ENCODE measurements at regions of chr1 and their contacts with region 1.

Region 1: DNA sequence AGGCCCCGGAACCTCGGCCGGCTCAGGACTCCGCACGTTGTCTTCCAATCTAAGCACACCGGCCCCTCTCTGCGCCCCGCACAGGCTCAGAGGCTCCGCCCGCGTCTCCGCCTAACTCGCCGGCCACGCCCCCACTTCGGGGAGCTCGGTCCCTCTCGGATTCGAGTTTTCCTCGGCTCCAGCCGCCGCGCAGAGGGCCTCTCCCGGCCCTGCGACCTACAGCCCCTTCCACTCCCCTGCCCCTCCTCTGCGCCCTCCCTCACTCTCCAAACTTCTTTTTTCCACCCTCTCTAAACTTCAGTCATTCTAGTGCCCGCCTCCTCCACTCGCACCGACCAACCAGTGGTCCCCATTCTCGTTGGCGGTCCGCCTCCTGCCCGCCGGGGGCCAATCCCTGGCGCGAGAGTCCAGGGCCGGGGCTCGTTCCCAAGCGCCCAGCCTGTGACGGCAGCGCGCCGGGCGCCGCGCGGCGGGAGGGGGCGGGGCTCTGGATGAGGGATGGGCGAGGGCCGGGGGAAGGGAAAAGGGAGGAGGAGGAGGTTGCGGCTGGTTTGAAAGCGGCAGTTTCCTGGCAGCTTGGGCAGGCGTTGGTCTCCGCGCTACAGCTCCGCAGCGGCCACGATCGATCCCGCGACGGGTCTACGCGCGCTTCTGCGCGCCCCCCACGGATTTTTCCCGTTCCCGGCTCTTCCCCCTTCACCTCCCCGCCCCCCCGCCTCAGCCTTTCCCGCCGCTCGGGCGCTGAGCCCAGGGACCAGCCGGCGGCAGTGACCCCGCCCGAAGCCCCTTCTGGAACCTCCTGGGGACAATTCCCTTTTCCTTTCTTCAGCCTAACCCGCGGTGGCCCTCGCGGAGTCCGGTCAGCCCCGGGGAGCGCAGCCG is at the start of gene MAGI3:
- DNase-seq: peak; percentile 92 to 94 (median 93)
- H3K4me3 ChIP-seq: peak within 1 kb of the TSS; percentile 44 to 89
- H3K4me3 Mint-ChIP-seq: peak within 1 kb of the TSS; percentile 88 to 98 (median 92)
- H3K27ac ChIP-seq: peak within 1 kb of the TSS; percentile 60
- H3K27ac Mint-ChIP-seq: peak within 1 kb of the TSS; percentile 80 to 95 (median 91)
- H3K4me1 ChIP-seq: peaks cover 30% of the 10 kb centered on the region
- H3K4me1 Mint-ChIP-seq: peaks cover 20 to 36% (median 23%) of the 10 kb centered on the region in 4 donors
- H3K27me3 ChIP-seq: no peaks in the 10 kb centered on the region
- H3K27me3 Mint-ChIP-seq: no peaks in the 10 kb centered on the region
- total RNA-seq, gene MAGI3: 6.5 to 6.7 TPM

Region 2: DNA sequence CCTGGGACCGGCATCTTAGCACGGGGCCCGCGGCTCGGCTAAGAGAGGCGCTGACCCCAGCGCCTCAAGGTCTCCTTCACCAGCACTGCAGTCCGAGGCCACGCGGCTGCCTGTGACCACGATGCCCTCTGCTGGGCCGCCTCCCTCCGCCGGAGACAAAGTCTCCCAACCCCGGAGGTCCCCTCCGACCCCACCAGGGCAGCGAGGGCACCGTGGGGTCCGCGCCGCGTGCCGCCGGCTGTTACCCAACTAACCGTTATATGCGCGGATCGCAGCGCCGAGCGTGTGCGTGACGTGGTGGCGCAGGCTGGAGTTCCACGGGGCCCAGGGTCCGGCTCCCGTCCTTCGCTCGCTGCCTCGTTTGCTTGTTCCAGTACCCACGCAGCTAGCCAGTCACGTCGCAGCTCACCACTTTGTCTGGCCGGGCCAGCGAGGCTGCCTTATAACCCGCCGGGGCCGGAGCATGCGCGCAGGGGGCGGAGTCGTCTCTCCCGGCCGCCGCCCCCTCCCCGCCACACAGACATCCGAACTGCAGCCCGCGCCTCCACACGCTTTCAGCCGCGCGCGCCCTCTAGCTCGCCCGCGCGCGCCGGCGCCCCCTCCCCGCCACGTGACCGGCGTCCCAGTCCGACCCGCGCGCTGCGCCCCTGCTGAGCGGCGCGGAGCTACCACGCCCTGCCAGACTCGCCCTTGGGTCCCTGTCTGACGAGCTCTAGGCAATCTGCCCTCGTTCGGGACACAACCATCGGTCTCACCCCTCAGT is 434.2 kb before region 1 on chr1 and contains the start of gene SLC16A1:
- CTCF ChIA-PET with region 1: no interaction called
- POLR2A ChIA-PET with region 1: no interaction called
- intact Hi-C with region 1: loop called (anchors 5 kb)
- DNase-seq: peak; percentile 85 to 89 (median 87)
- H3K4me3 ChIP-seq: peak within 1 kb of the TSS; percentile 59 to 96
- H3K4me3 Mint-ChIP-seq: peak within 1 kb of the TSS; percentile 76 to 99 (median 97)
- H3K27ac ChIP-seq: peak within 1 kb of the TSS; percentile 80
- H3K27ac Mint-ChIP-seq: peak within 1 kb of the TSS; percentile 68 to 98 (median 95)
- H3K4me1 ChIP-seq: peaks cover 34% of the 10 kb centered on the region
- H3K4me1 Mint-ChIP-seq: peaks cover 38 to 73% (median 52%) of the 10 kb centered on the region in 4 donors
- H3K27me3 ChIP-seq: no peaks in the 10 kb centered on the region
- H3K27me3 Mint-ChIP-seq: no peaks in the 10 kb centered on the region
- total RNA-seq, gene SLC16A1: 9.7 to 12.7 TPM

Region 3: DNA sequence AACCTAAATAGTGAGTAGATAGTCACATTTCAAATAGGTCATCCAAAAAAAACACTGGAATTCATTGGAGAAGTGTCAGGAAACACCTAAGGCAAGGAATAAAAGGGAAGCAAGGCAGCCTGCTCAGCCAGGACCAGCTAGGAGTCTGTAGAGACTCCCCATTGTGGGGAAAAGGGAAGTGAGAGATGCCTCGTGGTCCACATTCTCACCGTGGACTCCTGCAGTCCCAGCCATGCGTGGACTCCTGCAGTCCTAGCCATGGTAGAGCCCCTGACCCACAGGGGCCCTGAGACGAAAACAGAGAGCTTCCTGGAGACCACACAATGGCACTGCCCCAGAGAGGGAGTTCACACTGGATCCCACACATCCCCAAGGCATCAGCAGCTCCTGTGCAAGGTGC is 219.7 kb before region 1 on chr1:
- CTCF ChIA-PET with region 1: no interaction called
- POLR2A ChIA-PET with region 1: no interaction called
- intact Hi-C with region 1: no loop called
- DNase-seq: no peak
- H3K4me3 ChIP-seq: no peak overlapping the region
- H3K4me3 Mint-ChIP-seq: no peak overlapping the region
- H3K27ac ChIP-seq: no peak overlapping the region
- H3K27ac Mint-ChIP-seq: no peak overlapping the region
- H3K4me1 ChIP-seq: no peaks in the 10 kb centered on the region
- H3K4me1 Mint-ChIP-seq: peaks cover 0 to 1% (median 0%) of the 10 kb centered on the region in 4 donors
- H3K27me3 ChIP-seq: no peaks in the 10 kb centered on the region
- H3K27me3 Mint-ChIP-seq: peaks cover 8 to 11% of the 10 kb centered on the region in 2 donors

Region 4: DNA sequence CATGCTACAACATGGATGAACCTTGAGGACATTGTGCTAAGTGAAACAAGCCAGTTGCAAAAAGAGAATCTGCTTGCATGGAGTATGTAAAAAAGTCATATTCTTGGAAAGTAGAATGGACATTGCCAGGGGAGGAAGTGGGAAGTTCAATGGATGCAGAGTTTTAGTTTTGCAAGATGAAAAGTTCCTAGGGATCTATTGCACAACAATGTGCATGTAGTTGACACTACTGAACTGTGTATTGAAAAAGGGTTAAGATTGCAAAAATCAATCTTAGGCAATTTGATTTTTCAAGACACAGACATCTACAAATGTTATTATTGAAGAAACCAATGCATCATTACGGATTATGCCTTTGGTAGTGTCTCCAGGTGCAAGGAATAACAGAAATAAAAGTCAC is 50.2 kb before region 1 on chr1:
- CTCF ChIA-PET with region 1: no interaction called
- POLR2A ChIA-PET with region 1: no interaction called
- intact Hi-C with region 1: no loop called
- DNase-seq: no peak
- H3K4me3 ChIP-seq: no peak overlapping the region
- H3K4me3 Mint-ChIP-seq: no peak overlapping the region
- H3K27ac ChIP-seq: no peak overlapping the region
- H3K27ac Mint-ChIP-seq: no peak overlapping the region
- H3K4me1 ChIP-seq: no peaks in the 10 kb centered on the region
- H3K4me1 Mint-ChIP-seq: no peaks in the 10 kb centered on the region
- H3K27me3 ChIP-seq: no peaks in the 10 kb centered on the region
- H3K27me3 Mint-ChIP-seq: peaks cover 11 to 24% of the 10 kb centered on the region in 2 donors

Region 5: GRCh38 chr1:113452921-113453770 is 63.0 kb after region 1 on chr1:
- CTCF ChIA-PET with region 1: no interaction called
- POLR2A ChIA-PET with region 1: no interaction called
- intact Hi-C with region 1: loop called (anchors 5 kb)
- DNase-seq: peak in 4 of 5 donors; percentile 9 to 15 (median 11)
- H3K4me3 ChIP-seq: no peak overlapping the region
- H3K4me3 Mint-ChIP-seq: no peak overlapping the region
- H3K27ac ChIP-seq: no peak overlapping the region
- H3K27ac Mint-ChIP-seq: no peak overlapping the region
- H3K4me1 ChIP-seq: no peaks in the 10 kb centered on the region
- H3K4me1 Mint-ChIP-seq: peaks cover 0 to 11% (median 7%) of the 10 kb centered on the region in 4 donors
- H3K27me3 ChIP-seq: no peaks in the 10 kb centered on the region
- H3K27me3 Mint-ChIP-seq: no peaks in the 10 kb centered on the region

Region 6: GRCh38 chr1:113542221-113542701 is 152.1 kb after region 1 on chr1:
- CTCF ChIA-PET with region 1: no interaction called
- POLR2A ChIA-PET with region 1: no interaction called
- intact Hi-C with region 1: no loop called
- DNase-seq: no peak
- H3K4me3 ChIP-seq: no peak overlapping the region
- H3K4me3 Mint-ChIP-seq: no peak overlapping the region
- H3K27ac ChIP-seq: no peak overlapping the region
- H3K27ac Mint-ChIP-seq: no peak overlapping the region
- H3K4me1 ChIP-seq: no peaks in the 10 kb centered on the region
- H3K4me1 Mint-ChIP-seq: peaks cover 0 to 3% (median 0%) of the 10 kb centered on the region in 4 donors
- H3K27me3 ChIP-seq: no peaks in the 10 kb centered on the region
- H3K27me3 Mint-ChIP-seq: no peaks in the 10 kb centered on the region

Region 7: DNA sequence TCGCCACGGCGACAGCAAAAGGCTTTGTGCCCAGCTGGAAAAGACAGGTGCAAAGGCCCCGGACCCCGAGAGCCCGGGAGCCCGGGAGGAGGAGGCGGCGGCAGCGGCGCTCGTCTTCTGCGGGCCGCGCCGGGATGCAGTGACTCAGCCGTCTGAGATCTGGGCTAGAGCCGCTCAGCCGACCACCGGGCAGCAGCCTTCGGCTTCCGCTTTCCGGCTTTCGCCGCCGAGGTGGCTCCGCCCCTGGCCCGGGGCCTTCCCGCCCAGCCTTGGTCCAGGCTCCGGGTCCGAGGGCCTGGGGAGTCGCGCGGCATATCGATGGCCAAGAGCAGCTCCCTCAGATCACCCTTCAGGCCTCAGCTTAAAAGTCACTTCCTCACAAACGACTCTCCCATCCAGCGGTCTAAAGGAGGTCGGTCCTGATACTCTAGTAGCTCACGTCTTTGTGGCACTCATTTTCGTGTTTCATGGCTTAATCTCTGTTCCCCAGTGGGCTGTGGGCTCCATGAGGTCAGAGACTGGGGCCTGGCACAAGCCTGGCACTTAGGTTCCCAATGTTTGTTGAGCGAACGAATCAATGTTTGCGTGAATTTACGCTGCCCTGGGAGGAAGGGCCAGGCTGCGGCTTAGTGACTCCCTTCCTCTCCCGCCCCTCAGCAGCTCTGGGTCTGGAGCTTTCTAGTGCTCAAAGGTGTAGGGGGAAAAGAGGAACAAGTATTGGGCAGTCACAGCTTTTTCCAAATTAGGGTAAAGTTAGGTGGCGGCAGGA is 369.3 kb after region 1 on chr1 and contains the start of gene PHTF1:
- CTCF ChIA-PET with region 1: no interaction called
- POLR2A ChIA-PET with region 1: no interaction called
- intact Hi-C with region 1: loop called (anchors 1 kb)
- DNase-seq: peak in 4 of 5 donors; percentile 33 to 70 (median 46)
- H3K4me3 ChIP-seq: peak within 1 kb of the TSS; percentile 59 to 77
- H3K4me3 Mint-ChIP-seq: peak within 1 kb of the TSS; percentile 92 to 98 (median 94)
- H3K27ac ChIP-seq: peak within 1 kb of the TSS; percentile 91
- H3K27ac Mint-ChIP-seq: peak within 1 kb of the TSS; percentile 94 to 98 (median 97)
- H3K4me1 ChIP-seq: peaks cover 16% of the 10 kb centered on the region
- H3K4me1 Mint-ChIP-seq: peaks cover 16 to 36% (median 25%) of the 10 kb centered on the region in 4 donors
- H3K27me3 ChIP-seq: no peaks in the 10 kb centered on the region
- H3K27me3 Mint-ChIP-seq: no peaks in the 10 kb centered on the region
- total RNA-seq, gene PHTF1: 8.7 to 9.8 TPM